ENCODE measurements at regions of chr7 and their contacts with region 1.

Region 1: DNA sequence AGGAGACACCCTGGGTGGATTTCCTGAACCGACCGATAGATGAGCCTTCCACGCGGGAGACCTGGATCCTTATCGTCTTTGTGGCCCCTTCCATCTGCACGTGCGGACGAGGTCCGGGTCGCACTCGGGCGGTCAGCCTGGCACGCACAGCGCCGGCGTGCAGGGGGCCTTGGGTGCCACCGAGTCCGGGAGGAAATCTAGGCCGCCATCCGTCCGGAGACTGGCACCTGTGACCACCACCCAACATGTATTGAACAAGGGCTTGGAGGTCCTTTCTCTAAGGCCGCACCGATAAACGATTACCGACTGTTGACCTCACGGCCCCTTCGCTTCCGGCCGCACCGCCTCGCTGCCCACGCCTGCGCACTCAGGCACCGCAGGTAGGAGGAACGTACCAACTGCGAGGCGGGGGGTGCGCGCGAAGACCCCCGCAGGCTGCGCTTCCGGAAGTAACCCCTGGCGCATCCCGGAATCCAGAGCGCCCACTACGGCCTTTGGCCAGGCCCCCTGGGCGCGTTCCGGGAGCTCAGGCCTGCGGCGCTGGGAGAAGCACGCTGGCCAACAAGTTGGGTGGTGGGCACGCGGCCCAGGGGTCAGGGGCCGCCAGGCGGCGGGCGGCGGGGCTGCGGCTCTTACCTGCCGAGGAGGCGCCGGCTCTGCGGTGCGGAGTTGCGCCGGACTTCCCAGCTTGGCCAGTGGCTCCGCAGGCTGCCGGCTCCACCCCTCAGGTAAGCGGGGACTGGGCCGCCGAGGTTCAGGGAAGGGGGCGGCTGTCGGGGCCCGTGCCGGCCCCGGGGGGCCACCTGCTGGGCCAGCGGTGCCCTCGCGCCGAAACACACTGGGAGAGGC is at the starts of genes ACTR3C and LRRC61:
- DNase-seq: peak; percentile 71
- H3K4me3 Mint-ChIP-seq: peak within 1 kb of the TSS; percentile 95
- H3K27ac Mint-ChIP-seq: peak within 1 kb of the TSS; percentile 99
- H3K4me1 Mint-ChIP-seq: peaks cover 46% of the 10 kb centered on the region
- H3K27me3 Mint-ChIP-seq: no peaks in the 10 kb centered on the region
- total RNA-seq, gene ACTR3C: 3.1 to 3.4 TPM
- total RNA-seq, gene LRRC61: 10.3 to 13.3 TPM

Region 2: GRCh38 chr7:150341256-150342120 is 18.4 kb after region 1 on chr7 and contains the start of gene RARRES2:
- CTCF ChIA-PET with region 1: no interaction called
- intact Hi-C with region 1: loop called (anchors 2 kb)
- DNase-seq: no peak
- H3K4me3 Mint-ChIP-seq: no peak within 1 kb of the TSS
- H3K27ac Mint-ChIP-seq: no peak within 1 kb of the TSS
- H3K4me1 Mint-ChIP-seq: peaks cover 4% of the 10 kb centered on the region
- H3K27me3 Mint-ChIP-seq: peaks cover 23% of the 10 kb centered on the region
- total RNA-seq, gene RARRES2: not detected

Region 3: DNA sequence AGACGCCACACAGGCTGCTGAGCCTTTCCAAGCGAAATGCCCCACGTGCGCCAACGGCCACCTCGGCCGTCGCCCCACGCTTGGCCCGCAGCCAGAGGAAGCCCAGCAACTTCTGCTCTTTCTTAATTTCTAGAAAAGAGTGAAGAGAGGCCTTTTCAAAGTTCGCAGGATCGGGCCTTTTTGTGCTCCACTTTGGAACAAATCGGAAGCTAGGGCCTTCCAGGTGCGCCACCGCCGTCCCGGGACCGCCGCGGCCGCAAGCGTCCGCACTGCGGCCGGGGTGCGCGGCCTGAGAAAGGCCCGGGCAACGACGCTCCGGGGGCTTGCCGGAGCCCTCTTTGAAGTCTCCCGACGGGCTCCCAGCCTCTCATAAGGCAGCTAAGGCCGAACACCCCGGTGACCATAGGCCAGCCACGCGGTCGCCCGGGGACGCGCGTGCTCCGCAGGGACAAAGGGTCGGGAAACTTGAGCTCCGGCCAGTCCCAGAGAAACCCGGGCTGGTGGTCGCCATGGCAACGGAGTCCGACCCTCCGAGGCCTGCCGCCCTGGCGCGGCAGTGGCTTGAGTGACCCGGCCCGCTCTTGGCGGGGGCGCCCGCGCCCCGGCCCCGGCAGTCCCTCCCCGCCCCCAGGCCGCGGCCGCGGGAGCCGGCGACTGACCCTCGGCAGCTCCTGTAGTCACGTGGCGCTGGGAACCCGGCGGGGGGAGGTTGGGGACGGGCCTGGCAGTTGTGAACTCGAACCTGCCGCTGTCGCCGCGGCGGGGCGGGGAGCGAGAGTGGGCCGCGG is 45.2 kb after region 1 on chr7 and contains the start of gene REPIN1:
- CTCF ChIA-PET with region 1: interaction called, 5 read pairs
- intact Hi-C with region 1: loop called (anchors 2 kb)
- DNase-seq: peak; percentile 84
- H3K4me3 Mint-ChIP-seq: peak within 1 kb of the TSS; percentile 94
- H3K27ac Mint-ChIP-seq: peak within 1 kb of the TSS; percentile 95
- H3K4me1 Mint-ChIP-seq: peaks cover 45% of the 10 kb centered on the region
- H3K27me3 Mint-ChIP-seq: no peaks in the 10 kb centered on the region
- total RNA-seq, gene REPIN1: 45.7 to 49.3 TPM

Region 4: GRCh38 chr7:150404805-150405583 is 81.9 kb after region 1 on chr7:
- CTCF ChIA-PET with region 1: no interaction called
- intact Hi-C with region 1: loop called (anchors 1 kb)
- DNase-seq: peak; percentile 76
- H3K4me3 Mint-ChIP-seq: peak overlapping the region; percentile 85
- H3K27ac Mint-ChIP-seq: peak overlapping the region; percentile 83
- H3K4me1 Mint-ChIP-seq: peaks cover 29% of the 10 kb centered on the region
- H3K27me3 Mint-ChIP-seq: no peaks in the 10 kb centered on the region

Region 5: DNA sequence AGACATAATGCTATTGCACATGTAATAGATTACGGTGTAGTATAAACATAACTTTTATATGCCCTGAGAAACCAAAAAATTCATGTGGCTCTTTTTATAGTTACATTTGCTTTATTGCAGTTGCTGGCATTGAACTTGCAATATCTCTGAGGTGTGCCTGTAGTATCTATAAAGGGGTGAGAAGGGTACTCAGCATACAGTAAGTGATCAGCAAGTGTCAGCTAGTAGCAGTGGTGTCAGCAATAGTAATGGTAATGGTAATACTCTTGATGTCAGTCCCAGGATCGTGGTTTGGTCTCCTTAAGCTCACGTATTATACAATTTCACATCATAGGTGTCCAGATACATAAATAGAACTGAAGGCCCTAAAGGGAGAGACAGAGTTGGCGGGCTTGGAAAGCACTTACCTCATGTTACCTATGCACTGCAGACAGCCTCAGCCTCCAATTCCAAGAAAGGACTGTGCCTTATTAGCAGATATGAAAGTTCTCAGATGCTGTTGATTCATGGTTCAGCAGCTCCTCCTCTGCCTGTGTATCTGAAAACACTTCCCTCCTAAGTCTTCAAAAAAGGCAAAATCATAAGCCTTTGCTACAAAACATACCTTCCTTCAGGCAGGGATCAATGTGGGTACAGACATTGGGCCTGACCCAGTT is 185.0 kb after region 1 on chr7:
- CTCF ChIA-PET with region 1: no interaction called
- intact Hi-C with region 1: loop called (anchors 2 kb)
- DNase-seq: peak; percentile 61
- H3K4me3 Mint-ChIP-seq: peak overlapping the region; percentile 79
- H3K27ac Mint-ChIP-seq: peak overlapping the region; percentile 96
- H3K4me1 Mint-ChIP-seq: peaks cover 97% of the 10 kb centered on the region
- H3K27me3 Mint-ChIP-seq: no peaks in the 10 kb centered on the region

Region 6: DNA sequence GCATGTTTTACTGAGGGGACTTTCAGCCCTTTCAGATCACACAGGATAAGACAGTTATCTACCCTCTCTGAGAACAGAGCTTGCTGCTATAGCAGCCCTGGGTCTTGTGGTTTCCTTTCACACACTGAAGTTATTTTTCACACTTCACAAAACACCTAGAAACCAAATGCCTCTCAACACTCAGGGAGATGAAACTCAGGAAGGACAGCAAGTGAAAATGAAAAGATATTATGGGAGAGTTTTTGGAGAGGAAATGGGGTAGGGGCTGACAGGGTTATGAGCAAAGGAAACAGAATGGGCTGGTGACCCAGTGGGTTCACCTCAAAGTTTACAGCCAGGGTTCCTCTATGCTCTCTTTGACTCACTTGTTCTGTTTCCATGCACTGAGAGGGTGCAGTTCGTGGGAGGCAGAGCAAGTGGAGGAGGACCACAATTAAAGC is 345.4 kb after region 1 on chr7:
- CTCF ChIA-PET with region 1: no interaction called
- intact Hi-C with region 1: loop called (anchors 5 kb)
- DNase-seq: peak; percentile 71
- H3K4me3 Mint-ChIP-seq: peak overlapping the region; percentile 19
- H3K27ac Mint-ChIP-seq: peak overlapping the region; percentile 95
- H3K4me1 Mint-ChIP-seq: peaks cover 88% of the 10 kb centered on the region
- H3K27me3 Mint-ChIP-seq: no peaks in the 10 kb centered on the region

Region 7: GRCh38 chr7:150799741-150800580 is 476.9 kb after region 1 on chr7 and contains the start of gene TMEM176B:
- CTCF ChIA-PET with region 1: no interaction called
- intact Hi-C with region 1: no loop called
- DNase-seq: no peak
- H3K4me3 Mint-ChIP-seq: peak within 1 kb of the TSS; percentile 59
- H3K27ac Mint-ChIP-seq: no peak within 1 kb of the TSS
- H3K4me1 Mint-ChIP-seq: peaks cover 10% of the 10 kb centered on the region
- H3K27me3 Mint-ChIP-seq: peaks cover 45% of the 10 kb centered on the region
- total RNA-seq, gene TMEM176B: not detected

Region 8: DNA sequence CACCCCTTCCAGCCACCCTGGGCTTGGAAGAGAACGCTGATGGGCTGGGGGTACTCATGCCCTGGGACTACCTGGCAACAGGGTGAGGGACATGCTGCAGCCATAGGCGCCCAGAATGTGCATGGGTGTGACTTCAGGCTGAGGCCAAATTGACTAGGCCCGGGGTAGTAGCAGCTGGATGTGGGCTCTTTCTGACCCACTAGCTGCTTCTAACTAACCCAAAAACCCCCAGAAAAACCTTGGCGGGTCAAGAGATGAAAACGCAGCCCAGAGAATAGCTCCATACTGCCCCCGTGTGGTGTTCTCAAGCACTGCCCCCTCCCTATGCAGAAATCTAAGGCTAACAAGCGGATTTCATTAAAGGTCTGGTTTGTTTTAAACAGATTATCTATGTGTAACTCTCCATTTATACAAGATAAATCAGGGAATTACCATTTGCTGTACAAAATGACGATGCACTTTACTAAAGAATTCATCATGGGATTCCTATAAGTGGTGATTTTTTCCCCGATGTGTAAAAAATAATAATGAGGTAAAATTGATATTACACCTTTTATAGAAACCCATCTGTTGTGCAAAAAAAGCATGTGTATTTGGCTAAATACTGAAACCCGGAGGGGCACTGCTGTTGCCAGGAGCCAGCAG is 921.3 kb after region 1 on chr7:
- CTCF ChIA-PET with region 1: no interaction called
- intact Hi-C with region 1: loop called (anchors 1 kb)
- DNase-seq: peak; percentile 81
- H3K4me3 Mint-ChIP-seq: peak overlapping the region; percentile 46
- H3K27ac Mint-ChIP-seq: no peak overlapping the region
- H3K4me1 Mint-ChIP-seq: peaks cover 41% of the 10 kb centered on the region
- H3K27me3 Mint-ChIP-seq: peaks cover 26% of the 10 kb centered on the region